Activated CD8-positive, alpha-beta T cell treated with anti-CD3 and anti-CD28 coated beads, Interleukin-2, amount 10 ng/mL, durations not matched to agents 7 days and 5 days (primary cell): ENCODE measurements at regions of chr19 and their contacts with region 1.

Region 1: DNA sequence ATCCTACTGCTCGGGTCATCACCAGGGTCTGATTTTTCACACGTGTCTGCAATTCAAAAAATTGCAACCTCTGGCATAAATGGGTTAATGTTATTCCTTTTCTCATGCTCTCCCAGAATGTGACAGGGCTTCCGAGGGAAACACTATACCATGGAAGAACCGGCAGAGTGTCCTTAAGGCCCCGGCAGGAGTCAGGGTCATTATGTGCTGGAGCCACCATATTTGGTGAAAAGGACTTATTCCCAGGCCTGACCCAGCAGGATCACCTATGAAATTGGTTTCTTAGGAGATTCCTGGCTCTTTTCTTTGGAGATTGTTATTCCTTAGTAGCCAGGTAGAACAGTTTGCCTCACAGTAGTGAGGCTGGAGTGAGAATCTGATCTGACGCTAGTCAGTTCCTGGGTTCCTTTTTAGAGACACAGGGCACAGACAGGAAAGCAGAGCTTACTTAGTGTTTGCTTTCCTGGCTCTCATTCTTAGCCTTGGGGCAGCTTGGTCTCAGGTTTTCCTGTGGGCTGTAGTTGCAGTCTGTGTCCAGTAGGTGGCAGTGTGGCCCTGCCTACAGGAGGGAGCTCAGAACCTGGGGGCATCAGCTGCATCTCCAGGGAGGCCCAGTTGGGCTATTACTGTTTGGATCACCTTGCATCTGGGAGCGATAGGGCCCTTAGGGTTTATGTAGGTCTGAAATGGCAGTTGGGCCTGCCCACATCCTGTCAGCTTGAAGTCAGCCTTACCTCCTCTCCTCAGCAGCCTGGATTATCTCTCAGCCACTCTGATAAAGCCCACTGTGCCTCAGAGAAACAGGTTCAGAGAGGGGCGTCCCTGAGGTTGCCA is 12.4 kb downstream of the SNRNP70 start:
- DNase-seq: peak; percentile 85
- ATAC-seq: peak; percentile 87
- H3K4me3 Mint-ChIP-seq: no peak overlapping the region
- H3K27ac Mint-ChIP-seq: peak overlapping the region; percentile 70
- H3K4me1 Mint-ChIP-seq: peaks cover 21% of the 10 kb centered on the region
- H3K27me3 Mint-ChIP-seq: no peaks in the 10 kb centered on the region

Region 2: GRCh38 chr19:48950159-48950558 is 147.5 kb before region 1 on chr19:
- CTCF ChIA-PET with region 1: no interaction called
- POLR2A ChIA-PET with region 1: no interaction called
- DNase-seq: no peak
- ATAC-seq: no peak
- H3K4me3 Mint-ChIP-seq: no peak overlapping the region
- H3K27ac Mint-ChIP-seq: no peak overlapping the region
- H3K4me1 Mint-ChIP-seq: peaks cover 4% of the 10 kb centered on the region
- H3K27me3 Mint-ChIP-seq: no peaks in the 10 kb centered on the region

Region 3: DNA sequence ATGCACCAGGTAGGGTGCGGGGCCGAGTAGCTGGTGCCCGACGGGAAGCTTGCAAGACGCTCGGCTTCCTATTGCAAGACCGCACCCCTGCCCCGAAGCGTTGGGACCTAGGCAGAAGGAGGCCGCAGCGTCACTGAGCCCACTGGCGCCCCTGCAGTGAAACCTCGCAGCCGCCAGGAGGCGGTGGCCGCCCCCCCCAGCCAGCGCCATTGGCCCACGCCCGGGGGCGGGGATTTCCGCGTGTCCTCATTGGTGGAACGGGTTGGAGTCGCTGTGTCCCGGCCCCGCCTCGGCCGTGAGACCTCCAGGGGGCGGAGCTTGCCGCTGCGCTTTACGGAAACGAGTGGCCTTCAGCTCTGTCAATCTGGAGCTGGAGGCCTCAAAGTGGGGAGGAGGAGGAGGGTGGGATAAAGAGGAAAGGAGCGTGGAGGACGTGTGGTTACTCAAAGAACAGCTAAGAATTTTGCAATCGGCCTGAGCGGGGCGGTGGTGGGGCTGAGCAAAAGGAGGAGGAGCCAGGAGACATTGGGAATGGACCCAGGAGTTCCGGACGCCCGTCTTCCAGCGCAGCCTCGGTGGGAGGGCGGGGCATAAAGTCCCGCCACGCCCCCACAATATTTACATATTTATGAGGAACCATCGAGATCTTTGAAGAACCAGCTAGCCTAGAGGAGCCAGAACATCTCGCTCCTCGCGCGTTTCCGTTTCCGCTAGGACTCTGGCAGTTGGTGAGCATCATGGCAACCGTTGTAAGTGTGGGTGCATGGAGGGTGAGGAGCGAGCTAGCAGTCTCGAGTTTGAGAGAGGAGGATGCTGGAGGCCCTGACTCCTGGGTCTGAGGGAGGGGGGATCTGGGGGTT is 104.3 kb before region 1 on chr19 and contains the starts of genes GYS1 and RUVBL2:
- CTCF ChIA-PET with region 1: interaction called, 12 read pairs
- POLR2A ChIA-PET with region 1: no interaction called
- DNase-seq: peak; percentile 99
- ATAC-seq: peak; percentile 95
- H3K4me3 Mint-ChIP-seq: peak within 1 kb of the TSS; percentile 92
- H3K27ac Mint-ChIP-seq: peak within 1 kb of the TSS; percentile 96
- H3K4me1 Mint-ChIP-seq: peaks cover 51% of the 10 kb centered on the region
- H3K27me3 Mint-ChIP-seq: no peaks in the 10 kb centered on the region
- total RNA-seq, gene GYS1: 54.7 to 57.9 TPM
- total RNA-seq, gene RUVBL2: 105 to 106 TPM

Region 4: GRCh38 chr19:49113762-49114629 is 16.3 kb after region 1 on chr19 and contains the start of gene LIN7B:
- CTCF ChIA-PET with region 1: interaction called, 94 read pairs
- POLR2A ChIA-PET with region 1: interaction called, 3 read pairs
- DNase-seq: peak; percentile 76
- ATAC-seq: peak; percentile 77
- H3K4me3 Mint-ChIP-seq: peak within 1 kb of the TSS; percentile 80
- H3K27ac Mint-ChIP-seq: peak within 1 kb of the TSS; percentile 75
- H3K4me1 Mint-ChIP-seq: peaks cover 32% of the 10 kb centered on the region
- H3K27me3 Mint-ChIP-seq: no peaks in the 10 kb centered on the region
- total RNA-seq, gene LIN7B: 3.7 to 6.3 TPM

Region 5: DNA sequence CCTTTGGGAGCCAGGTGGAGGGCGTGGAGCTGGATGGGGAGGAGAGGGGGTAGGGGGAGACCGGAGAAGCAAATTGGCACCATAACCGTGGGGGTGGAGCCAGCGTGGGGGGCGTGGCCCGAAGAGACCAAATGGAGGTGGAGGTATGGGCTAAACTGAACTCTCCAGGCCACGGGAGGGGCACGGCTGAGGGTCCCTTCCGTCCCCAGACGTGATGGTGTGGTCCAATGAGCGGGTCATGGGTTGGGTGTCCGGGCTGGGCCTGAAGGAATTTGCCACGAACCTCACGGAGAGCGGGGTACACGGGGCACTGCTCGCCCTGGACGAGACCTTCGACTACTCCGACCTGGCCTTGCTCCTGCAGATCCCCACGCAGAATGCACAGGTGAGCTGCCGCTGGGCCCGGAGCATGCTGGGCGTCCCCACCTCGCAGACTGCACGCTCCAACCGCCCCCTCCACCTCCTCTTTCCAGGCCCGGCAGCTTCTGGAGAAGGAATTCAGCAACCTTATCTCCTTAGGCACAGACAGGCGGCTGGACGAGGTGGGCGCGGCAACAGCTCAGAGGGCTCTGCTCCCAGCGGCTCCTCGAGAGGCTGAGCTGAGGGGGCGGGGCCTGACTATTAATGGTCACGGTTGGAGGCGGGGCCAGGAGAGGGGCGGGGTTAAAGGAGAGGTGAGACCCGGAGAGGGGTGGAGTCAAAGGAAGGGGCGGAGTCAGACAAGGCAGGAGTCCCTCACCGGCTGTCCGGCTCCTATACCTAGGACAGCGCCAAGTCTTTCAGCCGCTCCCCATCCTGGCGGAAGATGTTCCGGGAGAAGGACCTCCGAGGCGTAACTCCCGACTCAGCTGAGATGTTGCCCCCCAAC is 51.3 kb after region 1 on chr19:
- CTCF ChIA-PET with region 1: interaction called, 59 read pairs
- POLR2A ChIA-PET with region 1: interaction called, 5 read pairs
- DNase-seq: peak; percentile 86
- ATAC-seq: peak; percentile 45
- H3K4me3 Mint-ChIP-seq: peak overlapping the region; percentile 73
- H3K27ac Mint-ChIP-seq: no peak overlapping the region
- H3K4me1 Mint-ChIP-seq: peaks cover 40% of the 10 kb centered on the region
- H3K27me3 Mint-ChIP-seq: peaks cover 60% of the 10 kb centered on the region

Region 6: GRCh38 chr19:49210108-49210900 is 112.6 kb after region 1 on chr19:
- CTCF ChIA-PET with region 1: interaction called, 17 read pairs
- POLR2A ChIA-PET with region 1: no interaction called
- DNase-seq: peak; percentile 42
- ATAC-seq: peak; percentile 65
- H3K4me3 Mint-ChIP-seq: no peak overlapping the region
- H3K27ac Mint-ChIP-seq: no peak overlapping the region
- H3K4me1 Mint-ChIP-seq: peaks cover 15% of the 10 kb centered on the region
- H3K27me3 Mint-ChIP-seq: no peaks in the 10 kb centered on the region